CD8-positive, alpha-beta T cell (primary cell): ENCODE measurements at regions of chr1 and their contacts with region 1.

Region 1: DNA sequence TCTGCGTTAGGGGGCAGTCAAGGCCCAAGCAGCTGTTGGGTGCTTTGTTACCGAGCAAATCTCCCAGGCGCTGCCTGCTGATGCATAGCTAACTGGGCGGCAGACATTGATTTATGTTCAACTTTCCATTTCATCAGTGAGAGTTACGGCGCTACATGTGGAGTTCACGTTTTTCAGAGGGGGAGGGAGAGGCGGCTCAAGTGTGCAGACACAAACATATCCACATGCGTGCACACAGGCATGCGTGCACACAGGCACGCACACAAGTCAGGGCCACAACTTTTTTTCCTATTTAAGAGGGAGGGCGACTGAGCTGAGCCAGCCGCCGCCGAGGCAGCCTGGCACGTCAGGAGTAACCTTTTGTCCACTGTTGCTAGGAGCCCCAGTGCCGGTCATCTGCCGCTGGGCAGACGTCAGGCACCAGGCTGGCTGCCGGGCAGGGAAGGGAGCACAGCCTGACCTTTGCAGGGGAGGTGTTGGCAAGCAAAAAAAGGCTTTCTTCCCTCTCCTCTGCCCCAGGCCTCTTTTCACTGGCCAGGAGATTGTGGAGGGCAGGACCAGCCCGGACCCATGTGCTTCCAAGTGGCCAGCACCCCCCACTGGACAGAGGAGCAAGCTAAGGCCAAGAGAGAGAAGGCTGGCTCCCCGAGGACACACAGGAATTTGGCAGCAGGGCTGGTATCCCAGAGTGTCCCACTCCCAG is 73.3 kb downstream of the MRPL37 start:
- DNase-seq: peak in 1 of 9 experiments; percentile 35
- ATAC-seq: peak; percentile 44
- H3K4me3 ChIP-seq: no peak overlapping the region
- H3K4me3 Mint-ChIP-seq: no peak overlapping the region
- H3K27ac ChIP-seq: no peak overlapping the region
- H3K27ac Mint-ChIP-seq: peak overlapping the region; percentile 27
- H3K4me1 ChIP-seq: peaks cover 17% of the 10 kb centered on the region
- H3K4me1 Mint-ChIP-seq: peaks cover 56% of the 10 kb centered on the region
- H3K27me3 ChIP-seq: no peaks in the 10 kb centered on the region
- H3K27me3 Mint-ChIP-seq: no peaks in the 10 kb centered on the region
- CTCF ChIP-seq: no peak

Region 2: DNA sequence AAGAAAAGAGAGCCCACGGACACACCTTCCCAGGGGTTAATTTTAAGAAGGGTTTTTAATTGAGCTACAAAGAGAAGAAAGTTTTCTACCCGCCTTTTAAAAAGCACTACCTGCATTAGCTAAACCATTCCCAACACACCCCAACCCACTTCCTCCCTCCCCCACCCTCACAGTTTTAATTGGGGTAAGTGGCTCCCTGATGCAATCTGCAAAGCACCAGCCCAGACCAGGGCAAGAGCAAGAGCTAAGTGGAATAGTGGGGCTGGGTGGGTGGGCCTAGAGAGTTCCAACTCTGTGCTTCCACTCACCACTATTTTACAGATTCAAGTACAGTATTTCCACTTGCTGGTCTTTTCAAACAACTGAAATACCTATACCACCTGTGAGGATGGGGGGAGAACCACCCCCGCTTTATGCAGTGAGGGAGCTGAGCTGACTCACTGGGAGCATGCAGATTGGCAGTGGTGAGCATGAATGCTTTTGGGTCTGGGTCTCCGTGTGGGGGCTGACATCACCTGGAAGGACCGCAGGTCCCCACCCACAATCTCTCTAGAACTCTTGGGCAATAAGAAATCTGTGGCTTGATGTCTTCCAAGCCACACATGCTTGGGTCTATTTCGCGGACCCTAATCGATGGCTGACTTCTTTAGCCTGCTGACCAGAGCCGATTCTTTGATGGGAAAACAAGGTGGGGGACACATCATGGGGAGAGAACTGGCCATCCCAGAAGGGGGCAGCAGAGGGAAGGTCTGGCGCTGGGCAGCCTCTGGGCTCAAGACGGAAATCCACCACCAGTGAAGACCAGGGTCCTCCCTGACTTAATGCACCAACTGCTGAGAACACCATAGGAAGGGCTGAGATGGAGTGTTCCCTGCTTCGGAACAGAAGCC is 37.4 kb after region 1 on chr1:
- CTCF ChIA-PET with region 1: interaction called, 5 read pairs
- POLR2A ChIA-PET with region 1: interaction called, 6 read pairs
- intact Hi-C with region 1: loop called (anchors 5 kb)
- DNase-seq: peak in 3 of 9 experiments; percentile 26 to 47 (median 28)
- ATAC-seq: peak; percentile 55
- H3K4me3 ChIP-seq: peak overlapping the region in 1 of 2 experiments; percentile 1
- H3K4me3 Mint-ChIP-seq: peak overlapping the region; percentile 61
- H3K27ac ChIP-seq: no peak overlapping the region
- H3K27ac Mint-ChIP-seq: peak overlapping the region; percentile 80
- H3K4me1 ChIP-seq: peaks cover 72% of the 10 kb centered on the region
- H3K4me1 Mint-ChIP-seq: peaks cover 80% of the 10 kb centered on the region
- H3K27me3 ChIP-seq: no peaks in the 10 kb centered on the region
- H3K27me3 Mint-ChIP-seq: no peaks in the 10 kb centered on the region
- CTCF ChIP-seq: no peak

Region 3: GRCh38 chr1:54355931-54356679 is 82.9 kb after region 1 on chr1:
- CTCF ChIA-PET with region 1: no interaction called
- POLR2A ChIA-PET with region 1: no interaction called
- intact Hi-C with region 1: loop called in 1 of 2 experiments (anchors 2 kb)
- DNase-seq: peak in 2 of 9 experiments; percentile 29 to 54
- ATAC-seq: peak; percentile 3
- H3K4me3 ChIP-seq: peak overlapping the region; percentile 36 to 64
- H3K4me3 Mint-ChIP-seq: peak overlapping the region; percentile 86
- H3K27ac ChIP-seq: peak overlapping the region; percentile 18 to 41
- H3K27ac Mint-ChIP-seq: peak overlapping the region; percentile 92
- H3K4me1 ChIP-seq: peaks cover 53% of the 10 kb centered on the region
- H3K4me1 Mint-ChIP-seq: peaks cover 88% of the 10 kb centered on the region
- H3K27me3 ChIP-seq: no peaks in the 10 kb centered on the region
- H3K27me3 Mint-ChIP-seq: no peaks in the 10 kb centered on the region
- CTCF ChIP-seq: no peak